Endothelial cell of umbilical vein (primary cell): ENCODE measurements at regions of chr5 and their contacts with region 1.

Region 1: GRCh38 chr5:177317959-177318377 is 6.3 kb upstream of the MXD3 start:
- DNase-seq: peak; percentile 82
- H3K4me3 ChIP-seq: no peak overlapping the region
- H3K27ac ChIP-seq: no peak overlapping the region
- H3K4me1 ChIP-seq: peaks cover under 1% of the 10 kb centered on the region
- H3K27me3 ChIP-seq: no peaks in the 10 kb centered on the region
- CTCF ChIP-seq: peak; percentile 83 to 93
- POLR2A ChIP-seq: no peak

Region 2: GRCh38 chr5:177336112-177336511 is 18.1 kb after region 1 on chr5:
- CTCF ChIA-PET with region 1: interaction called, 7 read pairs
- POLR2A ChIA-PET with region 1: no interaction called
- dilution Hi-C with region 1: no loop called
- intact Hi-C with region 1: loop called (anchors 1 kb)
- DNase-seq: peak; percentile 31
- H3K4me3 ChIP-seq: no peak overlapping the region
- H3K27ac ChIP-seq: no peak overlapping the region
- H3K4me1 ChIP-seq: no peaks in the 10 kb centered on the region
- H3K27me3 ChIP-seq: no peaks in the 10 kb centered on the region
- CTCF ChIP-seq: peak; percentile 52 to 73
- POLR2A ChIP-seq: no peak

Region 3: DNA sequence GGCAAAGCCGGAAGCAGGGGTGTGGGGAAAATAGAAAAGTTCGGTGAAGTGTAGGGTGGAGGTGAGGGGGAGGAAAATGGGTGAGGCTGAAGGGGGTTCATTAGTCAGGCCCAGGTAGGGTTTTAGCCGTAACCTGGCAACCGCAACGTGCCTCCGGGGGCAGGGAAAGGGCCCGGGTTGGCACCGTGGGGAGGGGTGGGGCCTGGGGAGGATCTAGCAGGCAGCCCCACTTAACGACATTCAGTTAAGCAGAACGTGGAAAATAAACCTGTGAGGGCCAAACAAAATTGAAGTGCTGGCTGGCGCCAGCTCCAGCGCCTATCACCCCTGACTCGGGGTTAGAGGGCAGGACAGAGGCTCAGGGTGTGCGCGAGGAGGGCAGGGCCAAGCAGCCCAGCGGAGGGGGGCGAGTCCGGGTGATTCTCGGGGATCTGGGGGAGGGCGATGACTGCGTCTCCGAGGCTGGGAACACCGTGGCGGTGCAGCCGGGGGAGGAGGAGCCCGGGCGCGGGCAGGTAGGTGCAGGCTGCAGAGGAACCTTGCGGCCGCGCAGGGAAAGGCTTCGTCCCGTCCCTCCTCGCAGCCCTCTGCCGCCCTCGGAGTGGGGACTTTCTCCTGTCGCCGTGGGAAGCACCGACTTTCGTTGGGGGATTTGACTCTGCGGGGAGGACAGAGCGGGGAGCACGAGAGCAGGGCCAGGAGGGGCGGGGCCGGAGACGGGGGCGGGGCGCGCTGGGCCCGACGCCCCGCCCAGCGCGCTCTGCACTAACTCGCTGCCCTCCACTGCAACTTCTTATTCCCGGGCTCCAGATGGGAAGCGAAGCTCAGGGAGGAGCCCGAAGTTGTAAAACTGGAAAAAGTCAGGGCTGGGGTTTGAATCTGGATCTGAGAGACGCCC is 44.9 kb after region 1 on chr5:
- CTCF ChIA-PET with region 1: interaction called, 8 read pairs
- POLR2A ChIA-PET with region 1: no interaction called
- dilution Hi-C with region 1: loop called (anchors 5 kb)
- intact Hi-C with region 1: loop called (anchors 5 kb)
- DNase-seq: peak; percentile 53
- H3K4me3 ChIP-seq: peak overlapping the region in 2 of 3 experiments; percentile 17 to 24
- H3K27ac ChIP-seq: no peak overlapping the region
- H3K4me1 ChIP-seq: peaks cover 25% of the 10 kb centered on the region
- H3K27me3 ChIP-seq: no peaks in the 10 kb centered on the region
- CTCF ChIP-seq: no peak
- POLR2A ChIP-seq: no peak

Region 4: GRCh38 chr5:177382423-177383029 is 64.6 kb after region 1 on chr5:
- CTCF ChIA-PET with region 1: interaction called, 44 read pairs
- POLR2A ChIA-PET with region 1: no interaction called
- dilution Hi-C with region 1: no loop called
- intact Hi-C with region 1: loop called (anchors 1 kb)
- DNase-seq: peak; percentile 37
- H3K4me3 ChIP-seq: no peak overlapping the region
- H3K27ac ChIP-seq: no peak overlapping the region
- H3K4me1 ChIP-seq: no peaks in the 10 kb centered on the region
- H3K27me3 ChIP-seq: peaks cover 0 to 4% of the 10 kb centered on the region in 2 experiments
- CTCF ChIP-seq: peak in 1 of 2 donors; percentile 58
- POLR2A ChIP-seq: no peak

Region 5: GRCh38 chr5:178372142-178372571 is 1054.2 kb after region 1 on chr5:
- CTCF ChIA-PET with region 1: no interaction called
- POLR2A ChIA-PET with region 1: no interaction called
- dilution Hi-C with region 1: no loop called
- intact Hi-C with region 1: no loop called
- DNase-seq: no peak
- H3K4me3 ChIP-seq: no peak overlapping the region
- H3K27ac ChIP-seq: no peak overlapping the region
- H3K4me1 ChIP-seq: no peaks in the 10 kb centered on the region
- H3K27me3 ChIP-seq: no peaks in the 10 kb centered on the region
- CTCF ChIP-seq: no peak
- POLR2A ChIP-seq: no peak